ENCODE measurements at regions of chr6 and their contacts with region 1.

Region 1: DNA sequence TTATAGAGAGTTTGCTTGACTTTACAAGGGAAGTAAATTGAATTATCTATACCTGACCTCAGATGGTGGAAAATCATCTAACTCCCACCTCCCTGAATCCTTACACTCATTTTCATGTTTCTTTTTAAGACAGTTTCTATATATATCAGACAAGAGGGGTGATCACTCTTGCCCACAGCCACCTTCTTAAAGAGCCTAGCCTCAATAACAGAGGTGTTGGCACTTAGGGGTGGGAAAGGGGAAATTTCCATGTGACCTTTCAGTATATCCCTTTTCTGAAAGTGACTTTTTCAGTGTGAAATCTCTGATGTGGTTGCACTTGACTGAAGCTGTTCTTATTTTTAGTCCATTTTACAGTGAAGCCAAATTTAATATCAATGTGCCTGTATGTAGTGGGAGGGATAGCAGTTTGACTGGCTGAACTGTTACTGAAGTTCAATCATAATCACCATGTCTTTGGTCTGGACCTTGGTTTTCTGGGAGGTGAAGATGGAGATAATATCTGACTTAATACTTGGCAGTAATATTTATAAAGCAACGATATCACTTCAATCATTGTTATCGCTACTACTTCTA is 141.3 kb downstream of the MAP3K7 start:
- DNase-seq: no peak
- H3K4me3 Mint-ChIP-seq: no peak overlapping the region
- H3K27ac Mint-ChIP-seq: peak overlapping the region; percentile 88
- H3K4me1 Mint-ChIP-seq: peaks cover 66% of the 10 kb centered on the region
- H3K27me3 Mint-ChIP-seq: no peaks in the 10 kb centered on the region

Region 2: GRCh38 chr6:89582669-89583325 is 862.8 kb before region 1 on chr6:
- intact Hi-C with region 1: no loop called
- DNase-seq: no peak
- H3K4me3 Mint-ChIP-seq: no peak overlapping the region
- H3K27ac Mint-ChIP-seq: no peak overlapping the region
- H3K4me1 Mint-ChIP-seq: peaks cover 5% of the 10 kb centered on the region
- H3K27me3 Mint-ChIP-seq: peaks cover 6% of the 10 kb centered on the region

Region 3: DNA sequence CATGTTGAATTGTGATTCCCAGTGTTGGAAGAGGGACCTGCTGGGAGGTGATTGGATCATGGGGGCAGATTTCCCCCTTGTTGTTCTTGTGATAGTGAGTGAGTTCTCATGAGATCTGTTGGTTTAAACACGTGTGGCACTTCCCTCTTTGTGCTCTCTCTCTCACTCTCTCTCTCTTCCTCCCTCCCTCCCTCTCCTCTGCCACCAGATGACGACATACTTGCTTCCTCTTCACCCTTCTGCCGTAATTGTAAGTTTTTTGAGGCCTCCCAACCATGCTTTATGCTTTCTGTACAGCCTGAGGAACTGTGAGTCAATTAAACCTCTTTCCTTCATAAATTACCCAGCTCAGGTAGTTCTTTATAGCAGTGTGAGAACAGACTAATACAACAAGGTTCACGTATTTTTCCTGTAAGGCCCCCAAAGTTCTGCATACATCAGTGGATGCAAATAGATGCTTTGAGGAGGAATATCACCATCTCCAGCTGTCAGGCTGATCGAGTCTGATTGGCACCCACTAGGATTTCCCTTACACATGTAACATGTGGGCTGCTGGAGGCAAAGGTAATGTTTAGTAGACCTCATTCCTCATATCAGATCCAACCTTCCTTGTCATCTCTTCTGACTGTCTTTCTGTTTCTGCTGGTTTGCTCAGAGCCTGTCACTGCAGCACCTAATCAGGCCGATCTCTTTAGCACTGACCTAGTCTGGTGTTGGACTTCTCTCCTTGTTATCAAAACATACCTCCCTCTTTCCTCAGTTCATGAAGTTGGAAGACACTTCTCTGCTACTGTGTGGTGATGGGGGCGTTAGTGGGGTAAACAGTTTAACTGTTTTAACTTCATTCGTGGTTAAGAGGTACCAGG is 94.7 kb before region 1 on chr6:
- intact Hi-C with region 1: loop called (anchors 1 kb)
- DNase-seq: peak; percentile 38
- H3K4me3 Mint-ChIP-seq: peak overlapping the region; percentile 39
- H3K27ac Mint-ChIP-seq: peak overlapping the region; percentile 78
- H3K4me1 Mint-ChIP-seq: peaks cover 46% of the 10 kb centered on the region
- H3K27me3 Mint-ChIP-seq: peaks cover 10% of the 10 kb centered on the region

Region 4: GRCh38 chr6:90406142-90406794 is 39.4 kb before region 1 on chr6:
- intact Hi-C with region 1: loop called (anchors 1 kb)
- DNase-seq: peak; percentile 26
- H3K4me3 Mint-ChIP-seq: peak overlapping the region; percentile 3
- H3K27ac Mint-ChIP-seq: peak overlapping the region; percentile 79
- H3K4me1 Mint-ChIP-seq: peaks cover 73% of the 10 kb centered on the region
- H3K27me3 Mint-ChIP-seq: peaks cover 4% of the 10 kb centered on the region

Region 5: DNA sequence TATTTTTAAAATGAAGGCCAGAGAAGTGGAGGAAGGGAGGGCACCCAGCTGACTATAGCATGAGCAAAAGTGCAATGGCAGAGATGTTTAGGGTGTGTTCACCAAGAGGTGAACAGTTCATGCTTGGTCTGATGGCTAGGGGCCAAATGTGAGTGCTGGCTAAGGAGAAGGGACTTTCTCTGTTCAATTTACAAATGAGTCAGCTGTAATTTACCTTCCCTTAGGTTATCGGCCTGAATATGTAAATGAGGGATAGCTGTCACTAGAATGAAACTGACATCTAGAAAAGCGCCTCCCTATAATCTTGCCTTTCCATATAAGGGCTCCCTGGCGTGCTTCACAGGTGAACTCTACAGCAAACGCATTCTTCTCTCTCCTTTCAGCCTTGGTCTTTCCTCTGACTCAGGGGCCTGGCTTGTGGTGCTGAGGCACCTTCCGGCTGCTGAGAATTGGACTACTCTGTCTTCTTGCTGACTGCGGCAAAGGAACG is 34.3 kb before region 1 on chr6:
- intact Hi-C with region 1: loop called (anchors 1 kb)
- DNase-seq: peak; percentile 59
- H3K4me3 Mint-ChIP-seq: no peak overlapping the region
- H3K27ac Mint-ChIP-seq: peak overlapping the region; percentile 75
- H3K4me1 Mint-ChIP-seq: peaks cover 81% of the 10 kb centered on the region
- H3K27me3 Mint-ChIP-seq: no peaks in the 10 kb centered on the region

Region 6: GRCh38 chr6:90425161-90425641 is 20.4 kb before region 1 on chr6:
- intact Hi-C with region 1: loop called (anchors 1 kb)
- DNase-seq: no peak
- H3K4me3 Mint-ChIP-seq: peak overlapping the region; percentile 68
- H3K27ac Mint-ChIP-seq: peak overlapping the region; percentile 87
- H3K4me1 Mint-ChIP-seq: peaks cover 26% of the 10 kb centered on the region
- H3K27me3 Mint-ChIP-seq: no peaks in the 10 kb centered on the region

Region 7: DNA sequence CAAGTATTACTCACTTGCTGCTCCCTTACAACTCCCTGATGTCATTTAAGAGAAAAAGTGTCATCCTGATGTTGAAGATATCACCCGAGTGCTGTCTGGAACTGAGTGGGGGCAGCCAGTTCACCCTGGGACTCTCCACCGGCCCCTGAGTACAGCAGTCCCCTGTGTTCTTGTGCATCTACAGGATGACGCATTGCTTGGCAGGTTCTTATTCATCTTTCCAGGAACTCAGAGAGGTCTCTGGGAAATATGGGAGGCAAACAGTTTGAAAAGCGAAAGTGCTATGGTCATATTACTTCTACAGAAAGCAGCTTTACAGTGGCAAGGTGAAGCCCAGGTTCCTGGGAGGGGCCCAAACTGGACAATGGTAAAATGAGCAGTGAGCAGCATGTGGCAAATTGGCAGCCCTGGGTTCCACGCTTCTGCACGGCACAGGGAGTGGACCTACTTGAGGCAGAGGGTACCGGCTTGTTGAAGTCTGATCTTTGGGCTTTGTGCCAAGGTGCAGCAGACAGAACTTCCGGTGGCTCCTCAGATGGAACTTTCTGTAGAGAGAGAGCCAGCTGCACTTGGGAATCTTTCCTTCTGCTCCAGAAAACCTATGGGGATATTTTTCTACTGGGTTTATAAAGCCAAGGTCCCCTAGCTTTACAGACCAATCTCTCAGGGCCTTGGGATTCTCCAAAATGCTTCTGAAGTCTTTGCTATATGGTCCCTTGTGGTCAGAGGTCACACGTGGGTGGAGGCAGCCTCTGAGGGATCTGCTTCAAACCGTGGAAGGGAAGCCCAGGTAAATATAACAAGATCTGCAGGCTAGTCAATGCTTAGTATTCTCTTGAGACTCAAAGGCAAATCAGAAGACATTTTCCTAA is 13.0 kb after region 1 on chr6:
- intact Hi-C with region 1: loop called (anchors 1 kb)
- DNase-seq: peak; percentile 66
- H3K4me3 Mint-ChIP-seq: peak overlapping the region; percentile 47
- H3K27ac Mint-ChIP-seq: peak overlapping the region; percentile 93
- H3K4me1 Mint-ChIP-seq: peaks cover 65% of the 10 kb centered on the region
- H3K27me3 Mint-ChIP-seq: no peaks in the 10 kb centered on the region

Region 8: DNA sequence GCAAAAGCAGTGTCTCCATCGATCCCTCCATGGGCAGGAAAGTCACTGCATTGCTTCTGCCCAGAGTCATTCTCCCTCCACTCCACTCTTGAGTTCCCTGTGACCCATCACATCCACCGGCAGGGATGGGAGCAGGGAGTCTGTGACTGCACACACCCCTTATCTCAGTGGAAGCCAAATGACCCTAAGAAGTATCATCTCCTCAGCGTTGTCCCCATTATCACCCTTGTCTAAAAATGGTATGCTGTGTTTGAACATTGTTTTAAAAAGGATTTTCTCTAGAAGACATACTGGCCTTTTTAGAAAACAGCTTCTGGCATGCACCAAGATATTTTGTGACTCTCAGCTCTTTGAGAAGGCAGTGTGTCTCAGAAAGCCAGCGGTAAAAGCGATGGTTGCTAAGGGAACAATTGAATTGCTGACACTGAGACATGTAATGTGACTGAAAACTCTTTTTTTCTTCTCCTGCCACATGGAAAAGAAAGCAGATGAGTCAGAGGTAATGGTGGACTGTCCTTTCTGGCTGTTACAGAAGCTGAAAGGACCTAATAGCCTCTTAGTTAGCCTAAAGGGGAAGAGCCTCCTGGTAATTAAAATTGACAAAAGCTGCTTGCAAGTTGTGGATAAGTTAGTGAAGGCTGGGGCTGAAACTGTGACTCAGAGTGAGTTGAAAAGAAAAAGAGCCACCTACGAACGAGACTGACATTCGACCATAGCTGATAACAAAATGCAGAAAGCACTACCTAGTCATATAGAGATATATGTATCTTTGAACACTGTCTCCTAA is 20.7 kb after region 1 on chr6:
- intact Hi-C with region 1: loop called (anchors 1 kb)
- DNase-seq: no peak
- H3K4me3 Mint-ChIP-seq: peak overlapping the region; percentile 61
- H3K27ac Mint-ChIP-seq: peak overlapping the region; percentile 92
- H3K4me1 Mint-ChIP-seq: peaks cover 93% of the 10 kb centered on the region
- H3K27me3 Mint-ChIP-seq: no peaks in the 10 kb centered on the region

Region 9: GRCh38 chr6:90478789-90479602 is 33.4 kb after region 1 on chr6:
- intact Hi-C with region 1: no loop called
- DNase-seq: peak; percentile 76
- H3K4me3 Mint-ChIP-seq: peak overlapping the region; percentile 3
- H3K27ac Mint-ChIP-seq: peak overlapping the region; percentile 85
- H3K4me1 Mint-ChIP-seq: peaks cover 56% of the 10 kb centered on the region
- H3K27me3 Mint-ChIP-seq: peaks cover 2% of the 10 kb centered on the region

Measured in activated T-helper 1 cell treated with anti-CD3 and anti-CD28 coated beads, Interleukin-12 subunit alpha, Interleukin-12 subunit beta, Interleukin-2, Interleukin-4 antibody, amounts not matched to agents 30 ng/mL and 10 ng/mL and 1 ng/mL, durations not matched to agents 14 hours and 24 hours and 36 hours (primary cell).